ENCODE measurements at regions of chr2 and their contacts with region 1.

Region 1: GRCh38 chr2:216004697-216005283 is 8.6 kb downstream of the MREG start:
- DNase-seq: no peak
- H3K4me3 ChIP-seq: no peak overlapping the region
- CTCF ChIP-seq: no peak

Region 2: DNA sequence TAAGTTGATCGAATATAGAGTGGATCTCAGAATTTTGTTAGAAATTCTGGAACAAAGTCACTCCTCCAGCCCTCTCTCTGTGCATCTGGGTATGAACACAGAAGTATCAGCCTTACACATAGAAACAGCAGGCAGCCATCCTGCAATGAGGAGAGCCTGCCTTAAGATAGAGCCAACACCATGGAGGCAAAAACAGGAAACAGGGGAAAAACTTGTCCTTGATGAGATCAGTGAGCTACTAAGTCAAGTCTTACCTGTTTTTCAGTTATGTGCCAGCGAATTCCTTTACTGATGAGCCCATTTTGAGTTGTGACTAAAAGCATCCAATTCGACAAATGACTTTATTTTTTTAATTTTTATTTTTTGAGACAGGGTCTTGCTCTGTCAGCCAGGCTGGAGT is 35.1 kb after region 1 on chr2:
- in situ Hi-C with region 1: loop called (anchors 5 kb)
- DNase-seq: no peak
- H3K4me3 ChIP-seq: no peak overlapping the region
- CTCF ChIP-seq: no peak

Measured in astrocyte of the cerebellum (primary cell).